Activated CD4-positive, alpha-beta T cell treated with anti-CD3 and anti-CD28 coated beads, Interleukin-2, amount 10 ng/mL, durations not matched to agents 24 days and 14 days (primary cell): ENCODE measurements at regions of chr1 and their contacts with region 1.

Region 1: DNA sequence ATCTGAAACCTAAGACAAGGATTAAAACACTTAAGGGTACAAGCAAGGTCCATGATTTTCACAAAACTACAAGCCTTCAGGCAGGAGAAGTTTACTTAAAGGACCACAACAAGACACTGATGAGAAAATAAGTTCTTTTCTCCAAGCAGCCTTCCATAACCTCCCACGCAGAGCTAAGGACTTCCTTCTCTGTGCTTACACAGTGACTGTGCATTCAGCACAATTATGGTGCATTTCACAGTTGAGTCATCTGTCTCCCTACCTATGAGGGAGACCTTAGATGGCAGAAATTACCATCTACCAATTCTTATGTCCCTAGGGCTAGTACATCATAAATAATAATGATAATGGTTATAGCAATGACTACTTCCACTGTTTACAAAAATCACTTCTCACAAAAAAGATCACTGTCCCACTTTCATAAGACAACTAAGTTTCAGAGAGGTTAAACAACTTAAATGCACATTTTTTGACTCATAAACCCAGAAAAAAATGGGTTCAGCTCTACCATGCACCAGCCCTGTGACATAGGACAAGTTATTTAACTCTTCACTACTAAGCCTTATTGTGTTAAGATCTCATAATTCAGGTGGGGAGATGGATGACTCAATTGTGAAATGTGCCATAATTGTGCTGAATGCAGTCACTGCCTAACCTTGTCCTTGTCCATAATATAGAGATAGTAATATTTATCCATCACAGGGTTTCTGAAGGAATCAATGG is 45.3 kb downstream of the TARBP1 start:
- DNase-seq: no peak
- H3K4me3 Mint-ChIP-seq: no peak overlapping the region
- H3K27ac Mint-ChIP-seq: peak overlapping the region; percentile 32
- H3K4me1 Mint-ChIP-seq: peaks cover 10% of the 10 kb centered on the region
- H3K27me3 Mint-ChIP-seq: no peaks in the 10 kb centered on the region

Region 2: DNA sequence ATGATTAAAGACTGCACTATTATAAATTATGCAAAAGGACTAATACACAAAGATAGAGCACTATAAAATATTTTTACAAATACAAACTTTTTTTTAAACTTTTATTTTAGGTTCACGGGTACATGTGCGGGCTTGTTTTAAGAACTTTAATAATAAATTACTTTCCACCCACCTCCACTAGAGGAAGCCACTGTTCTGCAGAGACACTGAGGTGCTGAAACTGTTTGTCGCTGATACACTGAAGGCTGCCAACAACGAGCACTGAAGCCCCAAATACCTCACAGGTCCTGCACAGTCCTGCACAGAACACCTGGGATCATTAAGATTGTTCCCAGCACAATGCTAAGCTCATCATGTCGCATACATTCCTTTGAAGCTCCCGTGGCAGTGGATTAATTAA is 40.5 kb before region 1 on chr1:
- intact Hi-C with region 1: no loop called
- DNase-seq: peak; percentile 59
- H3K4me3 Mint-ChIP-seq: no peak overlapping the region
- H3K27ac Mint-ChIP-seq: no peak overlapping the region
- H3K4me1 Mint-ChIP-seq: peaks cover 7% of the 10 kb centered on the region
- H3K27me3 Mint-ChIP-seq: no peaks in the 10 kb centered on the region

Region 3: DNA sequence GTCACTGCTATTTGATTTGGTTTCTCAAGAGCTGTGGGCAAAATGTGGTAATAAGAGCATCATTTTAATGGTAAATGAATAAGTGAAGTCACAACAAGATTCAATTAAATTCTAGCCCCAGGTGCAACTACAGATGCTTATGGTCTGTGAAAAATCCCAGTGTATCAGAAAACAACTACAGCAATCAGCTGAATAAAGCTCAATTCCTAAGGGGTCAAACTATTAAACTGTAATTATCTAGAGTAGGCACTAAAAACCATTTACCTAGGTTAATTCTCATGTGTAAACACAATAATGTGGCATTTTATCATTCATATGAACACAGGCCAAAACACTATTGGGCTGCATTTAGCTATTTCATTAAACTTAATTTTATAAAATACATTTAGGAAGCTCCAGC is 35.7 kb after region 1 on chr1:
- intact Hi-C with region 1: loop called (anchors 5 kb)
- DNase-seq: no peak
- H3K4me3 Mint-ChIP-seq: no peak overlapping the region
- H3K27ac Mint-ChIP-seq: no peak overlapping the region
- H3K4me1 Mint-ChIP-seq: peaks cover 24% of the 10 kb centered on the region
- H3K27me3 Mint-ChIP-seq: no peaks in the 10 kb centered on the region